Heart right ventricle (tissue), 16 donors: ENCODE measurements at regions of chr3 and their contacts with region 1.

Region 1: DNA sequence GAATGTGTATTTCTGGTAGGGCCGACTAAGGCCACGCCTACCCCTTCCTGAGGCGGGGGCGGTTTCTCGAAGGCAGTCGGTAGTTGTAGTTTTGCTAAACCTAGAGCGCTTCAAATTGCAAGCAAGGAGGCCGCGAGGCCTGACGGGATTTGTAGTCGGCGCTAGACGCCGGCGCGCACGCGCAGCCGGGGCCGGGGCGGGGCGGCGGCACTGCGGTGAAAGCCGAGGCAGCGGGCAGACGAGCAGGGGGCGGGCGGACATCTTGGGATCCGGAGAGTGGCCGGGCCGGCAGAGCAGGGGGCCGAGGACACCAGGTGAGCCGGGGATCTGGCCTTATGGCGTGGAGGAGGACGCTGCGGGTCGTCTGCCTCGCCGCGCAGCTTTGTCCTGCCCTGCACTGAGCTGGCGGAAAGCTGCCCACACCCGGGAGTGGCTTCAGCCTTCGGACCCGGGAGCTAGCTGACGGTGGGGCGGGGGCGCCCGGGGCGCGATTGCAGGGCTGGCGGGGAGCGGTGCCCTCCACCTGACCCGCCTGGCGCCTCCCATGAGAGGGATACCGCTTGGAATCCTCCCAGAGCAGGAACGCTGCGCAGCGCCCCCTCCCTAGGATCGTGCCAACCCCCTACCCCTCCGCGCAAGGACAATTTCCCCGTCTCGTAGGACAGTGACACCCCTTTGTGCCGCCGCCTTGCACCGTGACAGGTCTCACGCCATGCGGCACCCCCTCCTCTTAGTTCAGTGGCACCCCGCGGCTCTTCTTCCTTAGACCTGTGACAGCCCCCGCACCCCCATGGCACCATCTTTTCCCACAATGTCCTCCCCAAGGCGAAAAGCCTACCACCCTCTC is at the start of gene AP2M1:
- DNase-seq: peak; percentile 98
- ATAC-seq: peak; percentile 92 to 96 (median 94)
- H3K4me3 ChIP-seq: peak within 1 kb of the TSS; percentile 86 to 100 (median 94)
- H3K27ac ChIP-seq: peak within 1 kb of the TSS; percentile 87 to 99 (median 98)
- H3K4me1 ChIP-seq: peaks cover 10 to 60% (median 42%) of the 10 kb centered on the region in 9 donors
- H3K27me3 ChIP-seq: no peaks in the 10 kb centered on the region
- CTCF ChIP-seq: peak in 1 of 9 donors; percentile 11
- total RNA-seq, gene AP2M1: 263 to 371 (median 321) TPM

Region 2: DNA sequence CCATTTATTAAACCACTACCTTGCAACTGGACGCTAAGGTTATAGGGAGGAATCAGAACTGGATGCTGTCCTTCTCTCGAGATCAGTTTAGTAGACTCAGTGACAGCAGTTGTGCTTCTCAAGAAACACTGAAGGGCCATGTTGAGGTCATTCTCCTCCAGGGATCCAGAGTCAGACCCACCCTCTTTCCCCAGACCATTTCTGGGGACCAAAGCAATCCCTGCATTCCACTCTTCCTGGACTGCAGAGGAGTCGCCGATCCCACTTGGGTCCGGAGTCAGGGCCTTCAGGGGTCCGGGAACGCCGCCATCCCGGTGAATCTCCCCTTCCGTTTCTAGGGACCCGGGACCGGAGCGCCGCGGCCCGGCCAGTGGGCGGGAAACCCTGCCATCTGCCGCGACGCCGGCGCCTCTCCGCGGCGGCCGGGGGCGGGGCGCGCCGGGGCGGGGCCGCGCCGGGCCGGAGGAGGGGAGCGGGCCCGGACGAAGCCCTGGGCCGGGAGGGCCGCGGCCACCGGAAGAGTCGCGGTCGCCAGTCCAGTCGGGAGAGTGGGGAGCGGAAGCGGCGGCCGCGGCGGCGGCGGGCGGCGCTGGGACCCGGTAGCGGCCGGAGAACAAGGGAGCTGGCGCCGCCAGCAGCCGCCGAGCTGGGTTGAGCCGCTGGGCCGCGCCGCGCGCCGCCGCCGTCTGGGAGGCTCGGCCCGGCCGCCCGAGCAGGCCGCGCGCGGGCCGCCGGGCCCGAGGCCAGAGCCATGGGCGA is 19.8 kb before region 1 on chr3 and contains the start of gene DVL3:
- intact Hi-C with region 1: loop called in 2 of 10 experiments (anchors 2 kb)
- DNase-seq: peak; percentile 74 to 82
- ATAC-seq: peak; percentile 59 to 93 (median 81)
- H3K4me3 ChIP-seq: peak within 1 kb of the TSS; percentile 87 to 99 (median 97)
- H3K27ac ChIP-seq: peak within 1 kb of the TSS; percentile 91 to 99 (median 96)
- H3K4me1 ChIP-seq: peaks cover 22 to 53% (median 42%) of the 10 kb centered on the region in 9 donors
- H3K27me3 ChIP-seq: no peaks in the 10 kb centered on the region
- CTCF ChIP-seq: no peak
- total RNA-seq, gene DVL3: 52.6 to 81.7 (median 68.6) TPM